ENCODE measurements at regions of chr11 and their contacts with region 1.

Region 1: DNA sequence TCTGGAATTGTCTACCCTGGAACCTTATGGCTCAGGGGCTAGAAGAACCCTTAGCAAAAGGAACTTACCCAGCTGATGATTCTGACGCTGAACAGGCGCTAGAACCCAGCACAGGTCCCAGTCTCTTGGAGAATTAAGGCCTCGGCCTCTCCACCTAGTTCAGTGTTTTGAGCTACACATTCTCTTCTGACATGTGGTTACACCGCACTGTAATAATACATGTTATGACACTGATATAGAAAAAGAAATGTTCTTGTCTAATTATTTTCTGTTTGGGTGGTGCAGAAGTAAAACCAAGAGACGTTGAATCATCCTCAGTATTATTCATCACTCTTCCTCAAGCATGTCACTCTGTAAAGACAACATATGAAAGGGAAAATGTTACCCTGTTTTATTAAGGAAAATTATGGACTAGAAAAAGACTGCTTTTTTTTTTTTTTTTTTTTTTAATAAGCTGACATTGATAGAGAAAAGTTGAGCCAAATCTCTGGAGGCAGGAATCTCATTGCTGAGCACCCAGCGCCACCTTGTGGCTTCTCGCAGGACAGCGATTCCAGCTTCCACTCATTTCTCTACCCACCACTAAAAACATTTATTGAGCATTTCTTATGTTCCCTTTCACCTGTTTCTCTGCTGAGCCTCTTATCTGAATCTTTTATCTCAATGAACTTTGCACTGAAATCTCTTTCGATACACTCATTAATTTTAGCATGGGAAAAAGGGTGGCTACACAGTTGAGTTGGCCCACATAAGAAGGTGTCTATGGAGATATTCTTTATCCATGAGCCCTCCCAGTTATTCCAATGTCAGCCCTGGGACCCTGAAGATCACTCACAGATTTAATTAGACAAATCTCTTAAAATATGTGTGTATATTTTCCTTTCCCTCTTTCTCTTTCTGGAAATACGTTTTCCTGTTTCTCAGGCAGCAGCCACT is 12.6 kb upstream of the APLNR start:
- DNase-seq: no peak
- H3K4me3 ChIP-seq: peak overlapping the region in 1 of 2 experiments; percentile 21; a peak in 1 of 4 replicates
- H3K27ac ChIP-seq: peak overlapping the region in 1 of 2 experiments; percentile 94; a peak in 2 of 4 replicates
- H3K4me1 ChIP-seq: peaks cover 0 to 15% of the 10 kb centered on the region in 2 experiments; a peak in 1 of 4 replicates
- H3K27me3 ChIP-seq: no peaks in the 10 kb centered on the region; the same call in 1 of the 2 replicates
- CTCF ChIP-seq: peak; percentile 89
- EP300 ChIP-seq: no peak
- RAD21 ChIP-seq: peak; percentile 96

Region 2: GRCh38 chr11:56624661-56625110 is 625.0 kb before region 1 on chr11:
- CTCF ChIA-PET with region 1: interaction called, 35 read pairs
- POLR2A ChIA-PET with region 1: no interaction called
- DNase-seq: peak; percentile 37
- H3K4me3 ChIP-seq: no peak overlapping the region
- H3K27ac ChIP-seq: no peak overlapping the region
- H3K4me1 ChIP-seq: no peaks in the 10 kb centered on the region
- H3K27me3 ChIP-seq: no peaks in the 10 kb centered on the region
- CTCF ChIP-seq: peak; percentile 76
- EP300 ChIP-seq: no peak
- RAD21 ChIP-seq: peak; percentile 62

Region 3: GRCh38 chr11:57055764-57056163 is 193.9 kb before region 1 on chr11:
- CTCF ChIA-PET with region 1: interaction called, 10 read pairs
- POLR2A ChIA-PET with region 1: no interaction called
- DNase-seq: no peak
- H3K4me3 ChIP-seq: no peak overlapping the region
- H3K27ac ChIP-seq: peak overlapping the region; percentile 91 to 98
- H3K4me1 ChIP-seq: peaks cover 11 to 14% of the 10 kb centered on the region in 2 experiments; a peak in 3 of 4 replicates
- H3K27me3 ChIP-seq: no peaks in the 10 kb centered on the region
- CTCF ChIP-seq: no peak
- EP300 ChIP-seq: no peak
- RAD21 ChIP-seq: no peak

Region 4: GRCh38 chr11:57116654-57117053 is 133.0 kb before region 1 on chr11:
- CTCF ChIA-PET with region 1: interaction called, 125 read pairs
- POLR2A ChIA-PET with region 1: no interaction called
- DNase-seq: peak; percentile 28
- H3K4me3 ChIP-seq: no peak overlapping the region
- H3K27ac ChIP-seq: no peak overlapping the region
- H3K4me1 ChIP-seq: no peaks in the 10 kb centered on the region
- H3K27me3 ChIP-seq: no peaks in the 10 kb centered on the region
- CTCF ChIP-seq: peak; percentile 53
- EP300 ChIP-seq: no peak
- RAD21 ChIP-seq: peak; percentile 72

Region 5: GRCh38 chr11:57155838-57156607 is 93.6 kb before region 1 on chr11:
- CTCF ChIA-PET with region 1: interaction called, 90 read pairs
- POLR2A ChIA-PET with region 1: interaction called, 4 read pairs
- DNase-seq: peak; percentile 44
- H3K4me3 ChIP-seq: no peak overlapping the region
- H3K27ac ChIP-seq: peak overlapping the region in 1 of 2 experiments; percentile 99; a peak in 2 of 4 replicates
- H3K4me1 ChIP-seq: peaks cover 0 to 49% of the 10 kb centered on the region in 2 experiments; a peak in 2 of 4 replicates
- H3K27me3 ChIP-seq: no peaks in the 10 kb centered on the region
- CTCF ChIP-seq: no peak
- EP300 ChIP-seq: peak in 1 of 2 experiments; percentile 78; a peak in 2 of 4 replicates
- RAD21 ChIP-seq: no peak

Region 6: DNA sequence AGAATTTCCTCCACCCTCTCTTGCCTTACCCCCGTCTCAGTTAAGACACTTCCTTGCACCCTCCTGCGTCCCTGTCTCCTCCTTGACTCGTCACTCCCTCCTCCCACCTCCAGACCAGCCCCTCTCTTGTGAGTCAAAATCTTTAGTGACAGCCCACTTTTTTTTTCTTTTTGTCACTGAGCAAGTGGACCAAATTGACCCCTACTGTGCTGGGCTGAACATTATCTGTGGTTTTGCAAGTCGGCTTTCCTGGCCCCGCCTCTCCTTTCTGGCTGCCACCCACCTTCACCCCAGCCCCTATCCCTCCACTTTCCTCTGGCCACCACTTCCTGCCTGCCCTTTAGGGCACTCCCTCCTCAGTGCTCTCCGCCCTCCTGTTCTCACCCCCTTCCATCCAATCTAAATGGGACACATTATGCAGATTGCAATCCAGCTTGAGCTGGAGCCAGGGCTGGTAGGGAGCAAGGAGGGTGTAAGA is 12.4 kb before region 1 on chr11 and contains the start of gene APLNR:
- CTCF ChIA-PET with region 1: interaction called, 52 read pairs
- POLR2A ChIA-PET with region 1: interaction called, 4 read pairs
- DNase-seq: no peak
- H3K4me3 ChIP-seq: no peak within 1 kb of the TSS
- H3K27ac ChIP-seq: peak within 1 kb of the TSS in 1 of 2 experiments; percentile 48; a peak in 2 of 4 replicates
- H3K4me1 ChIP-seq: peaks cover 0 to 41% of the 10 kb centered on the region in 2 experiments; a peak in 2 of 4 replicates
- H3K27me3 ChIP-seq: peaks cover 2% of the 10 kb centered on the region; the same call in 1 of the 2 replicates
- CTCF ChIP-seq: no peak
- EP300 ChIP-seq: no peak
- RAD21 ChIP-seq: no peak
- polyA plus RNA-seq, gene APLNR: 0.03 and 0.15 TPM in 2 replicates

Region 7: DNA sequence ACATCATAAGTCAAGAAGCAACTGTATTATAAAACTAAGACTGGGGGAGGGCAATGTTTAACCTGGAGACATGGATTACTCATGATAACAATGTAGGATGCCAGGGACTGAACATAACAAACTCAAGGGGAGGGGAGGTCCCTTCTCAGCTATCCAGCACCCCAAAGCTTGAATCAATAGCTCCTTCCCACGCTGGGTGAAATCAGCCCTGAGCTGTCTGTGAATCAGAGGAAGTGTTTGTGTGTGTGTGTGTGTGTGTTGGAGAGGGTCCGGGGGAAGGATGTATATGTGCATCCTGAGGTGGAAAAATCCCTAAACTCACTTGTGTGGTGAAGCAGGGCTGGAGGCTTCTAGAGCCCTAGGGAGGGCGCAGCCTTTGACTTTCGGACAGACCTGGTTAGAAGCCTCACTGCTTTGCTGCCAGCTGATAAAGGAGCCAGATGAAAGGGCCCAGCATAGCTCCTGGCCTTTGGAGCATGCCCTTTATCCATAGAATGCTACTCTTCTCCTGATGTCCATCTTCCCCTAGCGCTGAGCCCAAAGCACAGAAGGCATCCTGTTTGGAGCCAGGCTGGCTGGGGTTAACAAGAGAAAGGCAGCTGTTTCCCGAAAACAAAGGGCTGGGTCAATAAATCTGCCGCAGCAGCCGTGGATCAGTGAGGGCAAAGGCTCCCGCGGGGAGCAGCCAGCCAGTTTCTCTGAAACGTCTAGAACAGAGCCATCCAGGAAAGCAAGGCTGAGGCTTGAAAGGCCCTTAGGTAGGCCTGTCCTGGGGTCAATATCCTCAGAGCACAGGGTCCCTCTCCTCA is 39.3 kb after region 1 on chr11:
- CTCF ChIA-PET with region 1: no interaction called
- POLR2A ChIA-PET with region 1: no interaction called
- DNase-seq: peak; percentile 20
- H3K4me3 ChIP-seq: no peak overlapping the region
- H3K27ac ChIP-seq: peak overlapping the region in 1 of 2 experiments; percentile 55; a peak in 2 of 4 replicates
- H3K4me1 ChIP-seq: peaks cover 4 to 7% of the 10 kb centered on the region in 2 experiments; a peak in 2 of 4 replicates
- H3K27me3 ChIP-seq: no peaks in the 10 kb centered on the region
- CTCF ChIP-seq: no peak
- EP300 ChIP-seq: no peak
- RAD21 ChIP-seq: no peak

Region 8: GRCh38 chr11:57306161-57306876 is 56.7 kb after region 1 on chr11:
- CTCF ChIA-PET with region 1: interaction called, 10 read pairs
- POLR2A ChIA-PET with region 1: no interaction called
- DNase-seq: no peak
- H3K4me3 ChIP-seq: no peak overlapping the region
- H3K27ac ChIP-seq: no peak overlapping the region
- H3K4me1 ChIP-seq: peaks cover 0 to 10% of the 10 kb centered on the region in 2 experiments; a peak in 2 of 4 replicates
- H3K27me3 ChIP-seq: no peaks in the 10 kb centered on the region
- CTCF ChIP-seq: no peak
- EP300 ChIP-seq: no peak
- RAD21 ChIP-seq: no peak

Region 9: DNA sequence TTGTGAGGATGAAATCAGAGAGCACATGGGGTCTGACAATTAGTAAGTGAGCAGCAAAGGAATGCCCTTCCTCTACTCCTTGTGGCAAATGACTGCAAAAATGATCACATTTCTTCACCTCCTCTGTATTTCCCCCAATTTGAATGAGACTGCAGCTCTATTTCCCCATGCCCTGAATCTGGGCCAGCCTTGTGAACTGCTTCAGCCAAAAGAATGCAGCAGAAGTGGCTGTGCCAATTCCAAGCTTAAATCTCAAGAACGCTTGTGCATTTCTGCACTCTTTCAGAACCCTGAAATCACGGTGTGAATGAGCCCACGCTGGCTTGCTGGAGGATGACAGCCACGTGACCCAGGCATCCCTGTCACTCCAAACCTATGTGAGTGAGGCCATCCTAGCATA is 167.4 kb after region 1 on chr11:
- CTCF ChIA-PET with region 1: no interaction called
- POLR2A ChIA-PET with region 1: no interaction called
- DNase-seq: no peak
- H3K4me3 ChIP-seq: no peak overlapping the region
- H3K27ac ChIP-seq: no peak overlapping the region
- H3K4me1 ChIP-seq: no peaks in the 10 kb centered on the region
- H3K27me3 ChIP-seq: no peaks in the 10 kb centered on the region
- CTCF ChIP-seq: no peak
- EP300 ChIP-seq: no peak
- RAD21 ChIP-seq: no peak

Region 10: DNA sequence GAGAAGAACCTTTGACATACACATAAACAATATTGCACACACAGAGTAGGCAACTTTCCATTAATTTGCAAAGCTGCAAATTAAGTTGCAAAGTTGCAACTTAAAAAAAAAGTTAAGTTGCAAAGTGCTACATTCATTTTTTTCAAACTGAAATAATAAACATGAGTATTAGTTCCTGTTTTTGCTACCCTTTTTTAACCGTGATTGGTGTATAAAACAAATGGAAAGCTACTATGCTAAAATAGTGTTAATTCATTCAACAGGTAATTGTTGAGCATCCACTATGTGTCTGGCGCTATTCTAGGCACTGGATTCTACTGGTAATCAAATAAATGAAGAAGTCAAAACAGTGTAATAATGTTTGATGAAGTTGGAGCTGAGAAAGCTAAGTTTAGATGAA is 1337.3 kb after region 1 on chr11:
- CTCF ChIA-PET with region 1: no interaction called
- POLR2A ChIA-PET with region 1: no interaction called
- DNase-seq: no peak
- H3K4me3 ChIP-seq: no peak overlapping the region
- H3K27ac ChIP-seq: no peak overlapping the region
- H3K4me1 ChIP-seq: peaks cover 0 to 13% of the 10 kb centered on the region in 2 experiments; a peak in 3 of 4 replicates
- H3K27me3 ChIP-seq: no peaks in the 10 kb centered on the region
- CTCF ChIP-seq: no peak
- EP300 ChIP-seq: no peak
- RAD21 ChIP-seq: no peak